HEK293 (cell line): ENCODE measurements at regions of chr11 and their contacts with region 1.

Region 1: DNA sequence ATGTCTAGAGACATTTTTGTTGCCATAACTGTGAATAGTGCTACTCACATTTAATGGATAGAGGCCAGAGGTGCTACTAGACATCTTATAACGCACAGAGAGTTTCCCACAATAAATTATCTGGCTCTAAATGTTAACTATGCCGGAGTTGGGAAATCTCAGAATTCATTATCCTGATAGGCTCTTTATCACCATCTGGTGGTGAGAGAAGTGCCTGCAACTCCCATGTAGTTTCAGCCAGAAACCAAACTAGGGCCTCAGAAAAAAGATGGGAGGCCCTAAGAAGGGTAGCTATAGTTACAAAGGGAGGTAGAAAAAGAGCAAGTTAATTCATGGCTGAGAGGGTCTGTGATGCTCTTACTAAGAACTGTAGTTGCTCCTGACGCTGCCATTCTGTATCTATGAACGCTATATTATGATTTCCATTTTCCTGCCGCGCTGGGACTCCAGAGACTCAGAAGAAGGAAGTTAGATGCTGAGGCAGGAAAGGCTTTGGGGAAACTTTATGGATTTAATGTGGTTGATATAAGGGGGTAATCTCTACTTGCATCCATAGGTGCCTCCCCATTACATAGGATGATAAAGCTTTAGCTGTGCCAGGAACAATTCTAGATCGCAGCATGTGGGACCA is 22.9 kb upstream of the MRPL17 start:
- H3K4me3 ChIP-seq: no peak overlapping the region
- H3K27ac ChIP-seq: no peak overlapping the region
- H3K4me1 ChIP-seq: no peaks in the 10 kb centered on the region
- CTCF ChIP-seq: peak; percentile 18; the same call in 1 of the 2 replicates

Region 2: GRCh38 chr11:6646918-6647679 is 58.9 kb before region 1 on chr11:
- CTCF ChIA-PET with region 1: no interaction called
- POLR2A ChIA-PET with region 1: no interaction called
- H3K4me3 ChIP-seq: no peak overlapping the region
- H3K27ac ChIP-seq: no peak overlapping the region
- H3K4me1 ChIP-seq: no peaks in the 10 kb centered on the region
- CTCF ChIP-seq: no peak

Region 3: DNA sequence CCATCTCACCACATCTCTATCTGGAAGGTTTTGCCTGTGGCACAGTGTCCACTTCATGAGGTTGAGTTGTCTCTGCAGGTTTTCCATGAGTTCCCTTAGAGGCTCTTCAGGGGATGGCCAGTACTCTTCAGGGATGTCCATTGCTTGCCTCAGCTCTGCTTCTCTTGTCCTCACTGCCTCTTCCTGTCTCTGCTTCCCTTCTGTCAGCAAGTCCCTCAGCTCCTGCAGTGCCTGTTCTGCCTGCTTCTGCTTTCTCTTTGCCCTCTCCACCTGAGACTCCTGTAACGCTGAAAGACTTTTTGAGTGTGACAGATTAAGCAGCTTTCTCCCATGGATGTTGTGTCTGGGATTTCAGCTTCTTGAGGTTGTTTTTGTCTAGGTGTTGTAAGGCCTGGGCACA is 15.3 kb after region 1 on chr11:
- CTCF ChIA-PET with region 1: interaction called, 19 read pairs
- POLR2A ChIA-PET with region 1: no interaction called
- H3K4me3 ChIP-seq: no peak overlapping the region
- H3K27ac ChIP-seq: no peak overlapping the region
- H3K4me1 ChIP-seq: no peaks in the 10 kb centered on the region
- CTCF ChIP-seq: no peak